B cell (primary cell): ENCODE measurements at regions of chr7 and their contacts with region 1.

Region 1: GRCh38 chr7:95871078-95871782 is 98.9 kb downstream of the DYNC1I1 start:
- DNase-seq: peak; percentile 18
- ATAC-seq: no peak
- H3K4me3 ChIP-seq: no peak overlapping the region
- H3K4me3 Mint-ChIP-seq: no peak overlapping the region
- H3K27ac ChIP-seq: no peak overlapping the region
- H3K27ac Mint-ChIP-seq: no peak overlapping the region
- H3K4me1 ChIP-seq: no peaks in the 10 kb centered on the region
- H3K4me1 Mint-ChIP-seq: no peaks in the 10 kb centered on the region
- H3K27me3 ChIP-seq: peaks cover 0 to 4% (median 0%) of the 10 kb centered on the region in 4 experiments
- H3K27me3 Mint-ChIP-seq: peaks cover 19% of the 10 kb centered on the region
- CTCF ChIP-seq: peak; percentile 52

Region 2: DNA sequence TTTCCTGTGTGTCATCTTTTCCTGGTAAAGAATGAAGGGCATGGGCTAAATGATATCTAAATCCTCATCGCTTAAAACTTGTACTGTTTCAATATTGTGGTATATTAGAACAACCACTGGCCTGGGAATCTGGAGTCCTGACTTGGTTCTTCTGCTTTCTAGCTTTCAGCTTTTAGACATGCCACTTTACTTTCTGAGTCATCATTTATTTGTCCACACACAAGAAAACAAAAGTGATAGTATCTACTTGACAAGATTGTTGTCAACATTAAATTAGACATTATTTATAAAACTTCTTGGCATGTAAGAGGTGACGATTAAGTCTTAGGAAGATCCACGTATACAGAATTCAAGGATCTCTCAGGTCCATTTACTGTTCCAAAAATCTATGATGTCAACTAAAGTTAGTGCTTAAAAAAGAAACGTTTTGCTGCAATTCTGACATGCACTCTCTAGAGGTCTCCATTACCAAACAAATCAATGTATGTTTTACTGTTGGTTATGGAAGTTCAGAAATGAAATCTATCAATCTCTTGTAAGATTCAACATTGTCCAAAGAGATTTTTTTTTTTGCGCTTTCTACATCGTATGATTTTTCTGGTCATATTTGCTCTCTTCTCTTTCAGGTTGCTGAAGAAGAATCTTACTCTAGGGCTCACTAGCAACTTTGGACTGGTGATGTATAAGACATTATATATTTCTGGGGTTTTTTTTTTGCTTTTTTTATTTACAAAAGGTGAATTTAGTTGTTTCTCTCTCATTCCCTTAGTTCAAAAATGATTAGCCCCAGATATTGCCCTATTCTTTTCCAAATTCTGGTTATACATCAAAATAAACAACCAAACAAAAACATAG is 152.4 kb before region 1 on chr7:
- CTCF ChIA-PET with region 1: interaction called, 5 read pairs
- POLR2A ChIA-PET with region 1: no interaction called
- intact Hi-C with region 1: loop called (anchors 1 kb)
- DNase-seq: no peak
- ATAC-seq: no peak
- H3K4me3 ChIP-seq: no peak overlapping the region
- H3K4me3 Mint-ChIP-seq: no peak overlapping the region
- H3K27ac ChIP-seq: no peak overlapping the region
- H3K27ac Mint-ChIP-seq: no peak overlapping the region
- H3K4me1 ChIP-seq: peaks cover 0 to 8% of the 10 kb centered on the region in 2 donors
- H3K4me1 Mint-ChIP-seq: peaks cover 13% of the 10 kb centered on the region
- H3K27me3 ChIP-seq: peaks cover 0 to 9% (median 3%) of the 10 kb centered on the region in 4 experiments
- H3K27me3 Mint-ChIP-seq: peaks cover 19% of the 10 kb centered on the region
- CTCF ChIP-seq: no peak

Region 3: DNA sequence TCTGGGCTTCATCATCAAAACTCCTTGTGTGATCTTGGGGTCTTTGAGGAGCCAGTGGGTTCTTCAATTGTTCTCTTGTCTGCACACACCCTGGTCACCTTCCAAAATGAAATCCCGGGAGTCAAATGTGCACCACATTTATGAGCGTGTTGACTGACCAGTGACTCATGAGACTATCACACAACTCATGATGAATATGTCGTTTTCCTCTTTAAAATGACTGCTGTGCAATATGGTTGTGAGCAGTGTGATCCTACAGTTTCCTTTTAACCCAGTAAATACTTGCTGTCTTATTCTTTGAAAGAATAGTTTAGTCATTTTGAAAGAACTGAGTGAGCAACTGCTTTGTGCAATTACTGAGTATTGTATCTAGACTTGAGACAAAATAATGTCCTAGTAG is 50.3 kb after region 1 on chr7:
- CTCF ChIA-PET with region 1: no interaction called
- POLR2A ChIA-PET with region 1: no interaction called
- intact Hi-C with region 1: no loop called
- DNase-seq: no peak
- ATAC-seq: no peak
- H3K4me3 ChIP-seq: no peak overlapping the region
- H3K4me3 Mint-ChIP-seq: no peak overlapping the region
- H3K27ac ChIP-seq: no peak overlapping the region
- H3K27ac Mint-ChIP-seq: no peak overlapping the region
- H3K4me1 ChIP-seq: no peaks in the 10 kb centered on the region
- H3K4me1 Mint-ChIP-seq: peaks cover under 1% of the 10 kb centered on the region
- H3K27me3 ChIP-seq: peaks cover 0 to under 1% (median 0%) of the 10 kb centered on the region in 4 experiments
- H3K27me3 Mint-ChIP-seq: peaks cover 6% of the 10 kb centered on the region
- CTCF ChIP-seq: no peak